ENCODE measurements at regions of chr2 and their contacts with region 1.

Region 1: DNA sequence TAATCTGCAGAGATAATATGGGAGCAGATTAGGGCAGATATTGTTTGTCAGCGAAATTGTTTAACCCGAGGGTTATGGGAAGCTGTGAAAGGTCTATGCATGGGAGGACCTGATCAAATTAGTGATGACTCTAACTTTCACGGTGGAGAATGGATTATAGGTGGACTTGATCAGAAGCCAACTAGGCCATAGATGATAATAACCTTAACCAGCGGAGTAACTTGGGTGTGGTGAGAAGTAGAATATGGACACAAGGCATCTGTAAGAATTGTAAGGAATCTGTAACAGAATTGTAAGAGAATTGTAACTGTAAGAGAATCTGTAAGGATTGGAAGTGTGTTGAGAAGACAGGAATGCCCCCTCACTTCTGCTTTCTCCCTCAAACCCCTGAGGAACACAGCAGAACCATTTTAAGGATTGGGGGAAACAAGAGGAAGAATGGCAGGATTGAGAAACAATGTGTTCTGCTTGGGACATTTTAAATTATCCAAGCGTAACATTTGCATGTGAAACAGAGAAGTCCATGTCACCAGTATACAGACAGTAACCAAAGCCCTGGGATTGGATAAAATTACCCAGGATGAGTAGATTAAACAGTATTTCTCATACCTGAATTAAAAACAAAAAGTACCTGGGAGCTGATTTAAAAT is 14.9 kb upstream of the SLC39A10 start:
- DNase-seq: no peak
- H3K4me3 ChIP-seq: no peak overlapping the region
- H3K4me3 Mint-ChIP-seq: no peak overlapping the region
- H3K27ac ChIP-seq: no peak overlapping the region
- H3K27ac Mint-ChIP-seq: peak overlapping the region in 1 of 7 donors; percentile 6
- H3K4me1 ChIP-seq: no peaks in the 10 kb centered on the region
- H3K4me1 Mint-ChIP-seq: peaks cover 0 to 7% (median 3%) of the 10 kb centered on the region in 4 donors
- H3K27me3 ChIP-seq: no peaks in the 10 kb centered on the region
- H3K27me3 Mint-ChIP-seq: no peaks in the 10 kb centered on the region

Region 2: GRCh38 chr2:195601361-195601760 is 40.8 kb before region 1 on chr2:
- CTCF ChIA-PET with region 1: no interaction called
- POLR2A ChIA-PET with region 1: no interaction called
- intact Hi-C with region 1: loop called (anchors 5 kb)
- DNase-seq: no peak
- H3K4me3 ChIP-seq: no peak overlapping the region
- H3K4me3 Mint-ChIP-seq: no peak overlapping the region
- H3K27ac ChIP-seq: no peak overlapping the region
- H3K27ac Mint-ChIP-seq: no peak overlapping the region
- H3K4me1 ChIP-seq: peaks cover 6% of the 10 kb centered on the region
- H3K4me1 Mint-ChIP-seq: peaks cover 12 to 17% (median 12%) of the 10 kb centered on the region in 4 donors
- H3K27me3 ChIP-seq: no peaks in the 10 kb centered on the region
- H3K27me3 Mint-ChIP-seq: no peaks in the 10 kb centered on the region

Region 3: GRCh38 chr2:195672668-195673067 is 30.5 kb after region 1 on chr2:
- CTCF ChIA-PET with region 1: no interaction called
- POLR2A ChIA-PET with region 1: no interaction called
- intact Hi-C with region 1: no loop called
- DNase-seq: no peak
- H3K4me3 ChIP-seq: no peak overlapping the region
- H3K4me3 Mint-ChIP-seq: no peak overlapping the region
- H3K27ac ChIP-seq: no peak overlapping the region
- H3K27ac Mint-ChIP-seq: no peak overlapping the region
- H3K4me1 ChIP-seq: peaks cover 20% of the 10 kb centered on the region
- H3K4me1 Mint-ChIP-seq: peaks cover 23 to 47% (median 32%) of the 10 kb centered on the region in 4 donors
- H3K27me3 ChIP-seq: no peaks in the 10 kb centered on the region
- H3K27me3 Mint-ChIP-seq: no peaks in the 10 kb centered on the region

Region 4: GRCh38 chr2:195995499-195995898 is 353.3 kb after region 1 on chr2:
- CTCF ChIA-PET with region 1: no interaction called
- POLR2A ChIA-PET with region 1: no interaction called
- intact Hi-C with region 1: no loop called
- DNase-seq: no peak
- H3K4me3 ChIP-seq: no peak overlapping the region
- H3K4me3 Mint-ChIP-seq: no peak overlapping the region
- H3K27ac ChIP-seq: no peak overlapping the region
- H3K27ac Mint-ChIP-seq: no peak overlapping the region
- H3K4me1 ChIP-seq: no peaks in the 10 kb centered on the region
- H3K4me1 Mint-ChIP-seq: peaks cover 0 to 1% (median 0%) of the 10 kb centered on the region in 4 donors
- H3K27me3 ChIP-seq: no peaks in the 10 kb centered on the region
- H3K27me3 Mint-ChIP-seq: peaks cover 0 to 6% of the 10 kb centered on the region in 2 donors